ENCODE measurements at regions of chr10 and their contacts with region 1.

Region 1: DNA sequence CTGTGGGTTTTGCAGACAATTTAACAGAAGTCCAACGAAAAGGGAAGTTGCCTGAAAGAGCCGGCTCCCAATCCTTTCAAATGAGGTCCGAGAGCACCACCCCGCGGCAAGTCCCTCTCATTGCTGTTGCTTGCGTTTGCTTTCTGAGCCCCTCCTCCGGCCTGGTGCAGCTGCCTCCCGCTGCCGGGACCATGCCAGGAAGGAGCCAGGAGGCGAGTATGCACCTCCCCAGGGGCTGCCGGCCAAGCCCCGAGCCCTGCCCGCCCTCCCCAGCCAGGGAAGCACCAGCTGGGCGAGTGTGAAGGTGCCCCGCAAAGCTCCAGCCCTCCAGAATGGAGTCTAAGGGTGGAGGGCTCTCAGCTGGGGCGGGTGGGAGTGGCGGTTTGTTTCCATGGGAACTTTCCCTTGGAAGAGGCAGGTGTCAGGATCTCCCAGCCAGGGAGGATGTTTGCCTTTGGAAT is 25.8 kb upstream of the PPP2R2D start:
- DNase-seq: peak; percentile 72
- H3K4me3 ChIP-seq: no peak overlapping the region
- H3K27ac ChIP-seq: no peak overlapping the region
- H3K4me1 ChIP-seq: no peaks in the 10 kb centered on the region
- H3K27me3 ChIP-seq: no peaks in the 10 kb centered on the region
- CTCF ChIP-seq: peak; percentile 43

Region 2: DNA sequence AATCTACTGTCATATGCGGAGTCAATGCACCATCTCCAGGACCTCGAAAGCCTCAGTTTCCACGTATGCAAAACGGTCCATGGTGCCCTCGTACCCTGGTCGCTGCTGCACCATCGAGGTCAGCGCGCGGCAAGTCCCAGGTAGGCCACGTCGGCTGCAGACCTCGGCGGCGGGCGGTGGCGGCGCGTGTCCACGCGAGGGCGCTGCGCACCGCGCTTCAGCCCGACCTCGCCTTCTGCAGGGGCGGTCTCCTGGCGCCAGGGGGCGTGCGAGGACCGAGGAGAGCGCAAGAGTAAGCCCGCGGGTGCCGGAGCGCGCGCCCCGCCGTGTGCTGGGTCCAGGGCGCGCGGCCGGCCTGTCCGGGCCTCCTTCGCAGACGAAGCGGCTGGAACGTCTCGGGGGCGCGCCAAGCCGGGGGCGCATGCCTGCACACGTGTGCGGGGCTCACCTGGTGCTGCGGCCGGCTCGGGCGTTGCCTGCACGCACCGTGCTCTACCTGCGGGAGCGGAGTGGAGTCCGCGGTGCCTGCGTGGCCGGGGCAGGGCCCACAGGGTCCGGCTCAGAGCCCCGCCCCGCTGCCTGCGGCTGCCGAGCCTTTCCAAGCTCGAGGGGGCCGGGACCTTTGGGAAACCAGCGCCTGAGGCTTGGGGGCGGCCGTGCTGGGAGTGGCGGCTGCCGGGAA is 1684.8 kb before region 1 on chr10:
- intact Hi-C with region 1: loop called (anchors 5 kb)
- DNase-seq: peak; percentile 92
- H3K4me3 ChIP-seq: peak overlapping the region; percentile 63
- H3K27ac ChIP-seq: no peak overlapping the region
- H3K4me1 ChIP-seq: no peaks in the 10 kb centered on the region
- H3K27me3 ChIP-seq: no peaks in the 10 kb centered on the region
- CTCF ChIP-seq: peak; percentile 100

Region 3: DNA sequence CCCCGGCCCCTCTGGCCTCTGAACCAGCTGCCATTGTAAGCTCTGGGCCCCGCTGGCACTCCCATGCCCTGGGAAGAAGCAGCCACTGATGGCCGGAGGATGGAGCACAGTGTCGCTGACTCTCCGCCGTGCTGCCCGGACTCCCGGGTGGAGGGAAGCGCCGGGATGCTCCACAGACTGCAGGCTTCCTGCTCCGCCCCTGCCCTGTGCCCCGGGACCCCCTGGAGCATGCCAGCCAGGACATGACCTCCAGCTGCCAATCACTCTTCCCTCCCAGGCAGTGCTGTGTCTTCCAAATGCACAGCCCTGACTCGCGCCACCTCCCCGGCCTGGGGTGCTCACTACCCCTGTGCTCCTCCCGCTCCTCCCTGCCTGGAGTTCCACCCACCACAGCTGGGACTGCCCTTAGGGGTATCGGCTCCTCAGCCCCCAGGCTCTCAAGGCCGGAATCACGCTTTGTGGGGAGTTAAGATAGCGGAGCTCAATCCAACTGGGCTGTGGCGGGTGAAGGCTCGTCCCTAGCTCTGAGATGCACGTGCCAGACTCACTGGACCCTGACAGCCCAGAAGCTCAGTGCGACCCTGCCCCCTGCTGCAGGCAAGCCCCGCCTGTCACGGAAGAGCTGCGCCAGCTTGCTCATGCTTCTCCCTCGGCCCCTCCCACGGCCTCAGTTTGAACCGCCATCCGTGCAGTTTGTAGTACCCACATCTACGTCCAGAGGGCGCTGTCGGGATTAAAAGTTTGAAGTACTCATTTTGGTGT is 421.2 kb before region 1 on chr10:
- intact Hi-C with region 1: loop called (anchors 10 kb)
- DNase-seq: peak; percentile 68
- H3K4me3 ChIP-seq: no peak overlapping the region
- H3K27ac ChIP-seq: no peak overlapping the region
- H3K4me1 ChIP-seq: no peaks in the 10 kb centered on the region
- H3K27me3 ChIP-seq: no peaks in the 10 kb centered on the region
- CTCF ChIP-seq: peak; percentile 81

Region 4: GRCh38 chr10:131723297-131724168 is 151.5 kb before region 1 on chr10:
- intact Hi-C with region 1: no loop called
- DNase-seq: peak; percentile 13
- H3K4me3 ChIP-seq: no peak overlapping the region
- H3K27ac ChIP-seq: no peak overlapping the region
- H3K4me1 ChIP-seq: no peaks in the 10 kb centered on the region
- H3K27me3 ChIP-seq: no peaks in the 10 kb centered on the region
- CTCF ChIP-seq: no peak

Region 5: DNA sequence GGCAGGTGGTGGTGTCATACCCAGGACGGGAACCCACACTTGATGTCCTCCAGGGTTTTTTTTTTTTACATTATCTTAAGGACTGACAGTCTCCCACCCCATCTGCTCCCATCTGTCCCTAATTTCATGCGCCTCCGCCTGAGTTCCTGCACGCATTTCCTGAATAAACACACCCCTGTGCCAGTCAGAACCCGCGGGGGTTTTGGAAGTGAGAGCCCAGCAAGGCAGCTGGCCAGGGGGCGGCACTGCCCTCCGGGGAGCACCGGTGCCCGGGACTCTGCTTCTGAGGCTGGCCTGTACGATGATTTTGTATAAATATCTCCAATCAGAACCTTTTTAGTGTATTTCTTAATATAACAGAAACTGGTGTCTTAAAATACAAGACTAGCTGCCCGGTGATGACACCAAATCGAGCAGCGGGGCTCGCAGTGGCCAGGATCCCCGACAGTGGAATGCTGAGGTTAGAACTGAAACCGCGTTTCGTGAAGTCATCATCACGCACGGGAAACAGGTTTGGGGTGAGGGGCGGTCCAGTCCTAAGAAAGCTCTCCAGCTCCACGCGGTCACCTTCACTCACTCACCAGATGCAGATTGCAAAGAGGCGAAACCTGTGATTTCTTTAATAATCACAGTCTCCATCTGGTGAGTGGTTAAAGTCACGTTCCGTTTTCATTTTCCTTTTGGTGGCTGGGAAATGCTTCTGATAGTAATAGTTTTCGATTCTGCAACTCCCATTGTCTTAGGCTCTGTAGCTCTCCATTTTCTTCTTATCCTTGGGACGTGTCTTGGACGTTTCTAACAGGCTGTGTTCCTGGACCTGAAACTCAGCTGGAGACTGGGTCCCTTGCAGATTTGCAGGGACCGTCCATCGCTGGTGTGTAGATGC is 87.0 kb after region 1 on chr10:
- intact Hi-C with region 1: no loop called
- DNase-seq: no peak
- H3K4me3 ChIP-seq: no peak overlapping the region
- H3K27ac ChIP-seq: no peak overlapping the region
- H3K4me1 ChIP-seq: no peaks in the 10 kb centered on the region
- H3K27me3 ChIP-seq: no peaks in the 10 kb centered on the region
- CTCF ChIP-seq: no peak